SK-N-SH (cell line): ENCODE measurements at regions of chr9 and their contacts with region 1.

Region 1: GRCh38 chr9:9790216-9790872 is 822.5 kb downstream of the PTPRD start:
- DNase-seq: peak; percentile 43
- H3K4me3 ChIP-seq: peak overlapping the region in 1 of 2 experiments; percentile 37; a peak in 1 of 4 replicates
- H3K27ac ChIP-seq: no peak overlapping the region
- H3K4me1 ChIP-seq: no peaks in the 10 kb centered on the region; a peak in 1 of 4 replicates
- H3K27me3 ChIP-seq: no peaks in the 10 kb centered on the region
- CTCF ChIP-seq: peak; percentile 78
- EP300 ChIP-seq: no peak
- RAD21 ChIP-seq: peak; percentile 89

Region 2: DNA sequence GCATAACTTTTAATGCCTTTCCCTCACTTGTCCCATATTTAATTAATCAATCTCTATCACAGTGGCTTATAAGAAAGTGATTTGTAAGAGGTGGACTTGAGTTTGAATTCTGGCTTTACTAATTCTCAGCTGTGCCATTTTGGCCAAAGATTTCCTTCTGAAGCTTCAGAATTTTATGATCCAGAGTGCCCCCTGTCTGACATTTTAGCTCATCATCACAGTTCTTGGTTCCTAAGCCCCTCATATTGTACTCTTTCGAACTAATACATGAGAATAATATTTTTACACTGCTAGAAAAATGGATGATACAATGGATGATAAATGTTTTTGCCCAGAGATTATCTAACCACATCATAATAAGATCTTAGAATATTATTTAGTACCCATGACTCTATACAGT is 191.6 kb before region 1 on chr9:
- CTCF ChIA-PET with region 1: interaction called, 161 read pairs
- POLR2A ChIA-PET with region 1: no interaction called
- DNase-seq: no peak
- H3K4me3 ChIP-seq: no peak overlapping the region
- H3K27ac ChIP-seq: no peak overlapping the region
- H3K4me1 ChIP-seq: no peaks in the 10 kb centered on the region; a peak in 1 of 4 replicates
- H3K27me3 ChIP-seq: no peaks in the 10 kb centered on the region
- CTCF ChIP-seq: no peak
- EP300 ChIP-seq: no peak
- RAD21 ChIP-seq: peak; percentile 15; the same call in 1 of the 2 replicates

Region 3: GRCh38 chr9:9804109-9804508 is 13.8 kb after region 1 on chr9:
- CTCF ChIA-PET with region 1: interaction called, 20 read pairs
- POLR2A ChIA-PET with region 1: no interaction called
- DNase-seq: no peak
- H3K4me3 ChIP-seq: no peak overlapping the region
- H3K27ac ChIP-seq: no peak overlapping the region
- H3K4me1 ChIP-seq: no peaks in the 10 kb centered on the region
- H3K27me3 ChIP-seq: no peaks in the 10 kb centered on the region
- CTCF ChIP-seq: no peak
- EP300 ChIP-seq: no peak
- RAD21 ChIP-seq: no peak

Region 4: DNA sequence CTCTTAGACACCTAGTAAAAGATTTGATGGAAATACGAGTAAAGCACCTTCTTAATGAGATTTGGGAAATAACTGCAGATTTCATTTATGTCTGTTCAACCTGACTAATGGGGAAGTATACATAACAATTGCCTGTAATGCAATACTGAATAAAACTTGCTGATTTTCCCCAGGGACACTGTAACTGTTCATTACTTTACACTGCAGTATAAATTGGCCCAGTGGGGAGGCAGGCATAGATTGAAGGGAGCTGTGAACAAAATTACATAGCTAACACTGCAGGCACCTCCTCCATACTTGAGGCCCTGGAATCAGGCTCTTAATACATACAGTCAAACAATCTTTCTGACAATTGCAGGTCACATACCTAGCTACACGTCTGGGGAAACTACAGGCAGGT is 606.3 kb after region 1 on chr9:
- CTCF ChIA-PET with region 1: no interaction called
- POLR2A ChIA-PET with region 1: no interaction called
- DNase-seq: no peak
- H3K4me3 ChIP-seq: no peak overlapping the region
- H3K27ac ChIP-seq: no peak overlapping the region
- H3K4me1 ChIP-seq: no peaks in the 10 kb centered on the region
- H3K27me3 ChIP-seq: no peaks in the 10 kb centered on the region
- CTCF ChIP-seq: no peak
- EP300 ChIP-seq: no peak
- RAD21 ChIP-seq: no peak